CD8-positive, alpha-beta T cell (primary cell): ENCODE measurements at regions of chrX and their contacts with region 1.

Region 1: DNA sequence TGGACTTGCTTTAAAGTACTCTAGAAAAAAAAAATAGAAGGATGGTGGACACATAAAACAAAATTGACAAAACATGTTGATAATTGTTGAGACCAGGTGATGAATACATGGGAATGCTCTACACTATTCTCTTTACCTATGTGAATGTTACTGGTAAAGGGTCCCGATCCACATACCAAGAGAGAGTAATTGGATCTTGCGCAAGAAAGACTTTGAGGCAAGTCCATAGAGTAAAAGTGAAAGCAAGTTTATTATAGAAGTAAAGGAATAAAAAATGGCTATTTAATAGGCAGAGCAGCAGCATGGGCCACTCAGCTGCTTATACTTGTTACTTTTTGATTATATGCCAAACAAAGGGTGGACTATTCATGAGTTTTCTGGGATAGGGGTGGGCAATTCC is 34.0 kb upstream of the PRR32 start:
- DNase-seq: no peak
- ATAC-seq: no peak
- H3K4me3 ChIP-seq: no peak overlapping the region
- H3K4me3 Mint-ChIP-seq: no peak overlapping the region
- H3K27ac ChIP-seq: no peak overlapping the region
- H3K27ac Mint-ChIP-seq: no peak overlapping the region
- H3K4me1 ChIP-seq: no peaks in the 10 kb centered on the region
- H3K4me1 Mint-ChIP-seq: no peaks in the 10 kb centered on the region
- H3K27me3 ChIP-seq: no peaks in the 10 kb centered on the region
- H3K27me3 Mint-ChIP-seq: no peaks in the 10 kb centered on the region
- CTCF ChIP-seq: no peak

Region 2: GRCh38 chrX:126265116-126265515 is 520.4 kb before region 1 on chrX:
- CTCF ChIA-PET with region 1: no interaction called
- POLR2A ChIA-PET with region 1: no interaction called
- intact Hi-C with region 1: loop called in 1 of 2 experiments (anchors 10 kb)
- DNase-seq: no peak
- ATAC-seq: no peak
- H3K4me3 ChIP-seq: no peak overlapping the region
- H3K4me3 Mint-ChIP-seq: no peak overlapping the region
- H3K27ac ChIP-seq: no peak overlapping the region
- H3K27ac Mint-ChIP-seq: no peak overlapping the region
- H3K4me1 ChIP-seq: no peaks in the 10 kb centered on the region
- H3K4me1 Mint-ChIP-seq: no peaks in the 10 kb centered on the region
- H3K27me3 ChIP-seq: no peaks in the 10 kb centered on the region
- H3K27me3 Mint-ChIP-seq: no peaks in the 10 kb centered on the region
- CTCF ChIP-seq: no peak

Region 3: GRCh38 chrX:126733874-126734273 is 51.7 kb before region 1 on chrX:
- CTCF ChIA-PET with region 1: no interaction called
- POLR2A ChIA-PET with region 1: no interaction called
- intact Hi-C with region 1: no loop called
- DNase-seq: no peak
- ATAC-seq: no peak
- H3K4me3 ChIP-seq: no peak overlapping the region
- H3K4me3 Mint-ChIP-seq: no peak overlapping the region
- H3K27ac ChIP-seq: no peak overlapping the region
- H3K27ac Mint-ChIP-seq: no peak overlapping the region
- H3K4me1 ChIP-seq: no peaks in the 10 kb centered on the region
- H3K4me1 Mint-ChIP-seq: no peaks in the 10 kb centered on the region
- H3K27me3 ChIP-seq: no peaks in the 10 kb centered on the region
- H3K27me3 Mint-ChIP-seq: no peaks in the 10 kb centered on the region
- CTCF ChIP-seq: no peak

Region 4: GRCh38 chrX:126815806-126816205 is 30.3 kb after region 1 on chrX:
- CTCF ChIA-PET with region 1: no interaction called
- POLR2A ChIA-PET with region 1: no interaction called
- intact Hi-C with region 1: no loop called
- DNase-seq: no peak
- ATAC-seq: no peak
- H3K4me3 ChIP-seq: no peak overlapping the region
- H3K4me3 Mint-ChIP-seq: no peak overlapping the region
- H3K27ac ChIP-seq: no peak overlapping the region
- H3K27ac Mint-ChIP-seq: no peak overlapping the region
- H3K4me1 ChIP-seq: no peaks in the 10 kb centered on the region
- H3K4me1 Mint-ChIP-seq: no peaks in the 10 kb centered on the region
- H3K27me3 ChIP-seq: no peaks in the 10 kb centered on the region
- H3K27me3 Mint-ChIP-seq: no peaks in the 10 kb centered on the region
- CTCF ChIP-seq: no peak